Activated T-helper 2 cell treated with anti-CD3 and anti-CD28 coated beads, Interferon-gamma antibody, Interleukin-2, Interleukin-4, amounts not matched to agents 10 μg/mL and 5 μg/mL and 100 μg/mL, durations not matched to agents 14 hours and 24 hours and 36 hours (primary cell): ENCODE measurements at regions of chr1 and their contacts with region 1.

Region 1: GRCh38 chr1:77143529-77144121 is 75.6 kb downstream of the PIGK start:
- DNase-seq: no peak
- H3K4me3 Mint-ChIP-seq: no peak overlapping the region
- H3K27ac Mint-ChIP-seq: no peak overlapping the region
- H3K4me1 Mint-ChIP-seq: peaks cover 2% of the 10 kb centered on the region
- H3K27me3 Mint-ChIP-seq: no peaks in the 10 kb centered on the region

Region 2: GRCh38 chr1:75991497-75992114 is 1152.0 kb before region 1 on chr1:
- intact Hi-C with region 1: loop called (anchors 5 kb)
- DNase-seq: peak; percentile 40
- H3K4me3 Mint-ChIP-seq: no peak overlapping the region
- H3K27ac Mint-ChIP-seq: no peak overlapping the region
- H3K4me1 Mint-ChIP-seq: no peaks in the 10 kb centered on the region
- H3K27me3 Mint-ChIP-seq: peaks cover 15% of the 10 kb centered on the region

Region 3: GRCh38 chr1:76939050-76939816 is 204.4 kb before region 1 on chr1:
- intact Hi-C with region 1: no loop called
- DNase-seq: no peak
- H3K4me3 Mint-ChIP-seq: no peak overlapping the region
- H3K27ac Mint-ChIP-seq: no peak overlapping the region
- H3K4me1 Mint-ChIP-seq: no peaks in the 10 kb centered on the region
- H3K27me3 Mint-ChIP-seq: no peaks in the 10 kb centered on the region

Region 4: GRCh38 chr1:77193951-77194350 is 50.3 kb after region 1 on chr1:
- intact Hi-C with region 1: no loop called
- DNase-seq: no peak
- H3K4me3 Mint-ChIP-seq: no peak overlapping the region
- H3K27ac Mint-ChIP-seq: no peak overlapping the region
- H3K4me1 Mint-ChIP-seq: peaks cover 8% of the 10 kb centered on the region
- H3K27me3 Mint-ChIP-seq: no peaks in the 10 kb centered on the region

Region 5: GRCh38 chr1:77533660-77534305 is 390.2 kb after region 1 on chr1:
- intact Hi-C with region 1: loop called (anchors 1 kb)
- DNase-seq: peak; percentile 27
- H3K4me3 Mint-ChIP-seq: no peak overlapping the region
- H3K27ac Mint-ChIP-seq: no peak overlapping the region
- H3K4me1 Mint-ChIP-seq: peaks cover 2% of the 10 kb centered on the region
- H3K27me3 Mint-ChIP-seq: no peaks in the 10 kb centered on the region